ENCODE measurements at regions of chr1 and their contacts with region 1.

Region 1: DNA sequence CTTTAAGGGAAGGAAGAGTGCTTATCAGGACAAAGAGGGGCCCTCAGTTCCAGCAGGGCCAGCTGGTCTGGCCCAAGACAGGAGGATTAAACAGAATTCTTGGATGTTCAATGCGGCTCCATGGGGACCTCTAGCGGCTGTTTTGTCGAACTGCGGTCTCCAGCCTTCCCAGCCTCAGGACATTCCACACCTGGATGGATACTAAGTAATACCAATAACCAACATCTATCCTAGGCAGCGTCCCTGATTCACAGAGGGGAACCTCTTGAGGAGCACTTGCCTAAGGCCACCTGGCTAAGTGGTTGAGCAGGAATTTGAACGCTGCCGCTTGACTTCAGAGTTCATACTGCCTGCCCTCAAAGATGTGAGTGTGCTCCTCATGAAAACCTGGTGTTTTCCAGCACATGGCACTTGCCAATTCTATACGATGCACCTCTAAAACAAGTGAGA is 15.5 kb upstream of the CD247 start:
- DNase-seq: peak; percentile 70
- ATAC-seq: peak; percentile 94

Region 2: GRCh38 chr1:167066333-167067122 is 467.3 kb before region 1 on chr1:
- intact Hi-C with region 1: loop called (anchors 10 kb)
- DNase-seq: peak; percentile 86
- ATAC-seq: peak; percentile 96

Region 3: DNA sequence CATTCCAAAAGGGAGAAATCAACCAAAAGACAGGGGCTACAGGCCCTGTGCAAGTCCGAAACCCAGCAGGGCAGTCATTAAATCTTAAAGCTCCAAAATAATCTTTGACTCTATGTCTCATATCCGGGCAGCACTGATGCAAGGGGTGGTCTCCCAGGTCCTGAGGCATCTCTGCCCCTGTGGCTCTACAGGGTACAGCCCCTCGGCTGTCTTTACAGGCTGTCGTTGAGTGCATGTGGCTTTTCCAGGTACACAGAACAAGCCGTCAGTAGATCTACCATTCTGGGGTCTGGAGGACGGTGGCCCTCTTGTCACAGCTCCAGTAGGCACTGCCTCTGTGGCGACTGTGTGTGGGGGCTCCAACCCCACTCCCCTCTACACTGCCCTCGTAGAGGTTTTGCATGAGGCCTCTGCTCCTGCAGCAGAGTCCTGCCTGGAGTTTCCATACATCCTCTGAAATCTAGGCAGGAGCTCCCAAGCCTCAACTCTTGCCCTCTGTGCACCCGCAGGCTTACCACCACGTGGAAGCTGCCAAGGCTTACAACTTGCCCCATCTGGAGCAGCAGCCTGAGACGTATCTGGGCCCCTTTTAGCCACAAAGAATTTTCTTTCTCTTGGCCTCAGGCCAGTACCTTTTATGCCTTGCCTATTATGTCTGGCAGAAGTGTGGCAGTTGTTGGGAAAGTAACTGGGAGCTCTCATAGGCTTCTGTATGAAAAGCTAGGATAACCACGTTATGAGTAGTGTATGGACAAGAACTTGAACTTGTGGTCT is 260.7 kb before region 1 on chr1:
- intact Hi-C with region 1: loop called (anchors 10 kb)
- DNase-seq: no peak
- ATAC-seq: peak; percentile 62

Region 4: DNA sequence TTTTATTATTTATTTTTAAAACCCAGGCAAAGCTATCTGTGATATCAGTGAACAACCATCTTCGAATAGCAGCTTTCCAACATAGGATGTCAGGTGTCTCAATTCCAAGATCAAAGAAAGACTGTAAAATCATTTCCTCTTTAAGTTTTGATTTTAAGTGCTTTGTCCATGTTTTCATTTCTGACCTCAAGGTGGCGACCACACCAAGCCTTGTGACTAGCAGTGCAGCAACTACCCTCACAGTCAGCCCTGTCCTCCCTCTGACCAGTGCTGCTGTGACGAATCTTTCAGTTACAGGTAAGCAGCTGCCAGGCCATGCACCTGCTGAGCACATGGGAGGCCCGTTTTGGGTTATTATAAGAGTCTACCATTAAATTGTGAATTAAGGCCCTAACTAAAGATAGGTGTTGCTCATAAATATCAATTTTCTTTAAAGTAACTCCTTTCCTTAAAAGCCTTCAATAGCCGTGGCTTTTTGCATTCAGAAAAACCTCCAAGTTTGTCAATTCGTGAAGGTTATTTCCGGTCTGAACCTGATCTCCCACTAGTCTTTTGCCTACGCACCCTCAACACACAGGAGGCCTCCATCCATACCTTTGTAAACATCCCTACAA is 132.5 kb before region 1 on chr1:
- intact Hi-C with region 1: loop called (anchors 5 kb)
- DNase-seq: no peak
- ATAC-seq: peak; percentile 64

Region 5: DNA sequence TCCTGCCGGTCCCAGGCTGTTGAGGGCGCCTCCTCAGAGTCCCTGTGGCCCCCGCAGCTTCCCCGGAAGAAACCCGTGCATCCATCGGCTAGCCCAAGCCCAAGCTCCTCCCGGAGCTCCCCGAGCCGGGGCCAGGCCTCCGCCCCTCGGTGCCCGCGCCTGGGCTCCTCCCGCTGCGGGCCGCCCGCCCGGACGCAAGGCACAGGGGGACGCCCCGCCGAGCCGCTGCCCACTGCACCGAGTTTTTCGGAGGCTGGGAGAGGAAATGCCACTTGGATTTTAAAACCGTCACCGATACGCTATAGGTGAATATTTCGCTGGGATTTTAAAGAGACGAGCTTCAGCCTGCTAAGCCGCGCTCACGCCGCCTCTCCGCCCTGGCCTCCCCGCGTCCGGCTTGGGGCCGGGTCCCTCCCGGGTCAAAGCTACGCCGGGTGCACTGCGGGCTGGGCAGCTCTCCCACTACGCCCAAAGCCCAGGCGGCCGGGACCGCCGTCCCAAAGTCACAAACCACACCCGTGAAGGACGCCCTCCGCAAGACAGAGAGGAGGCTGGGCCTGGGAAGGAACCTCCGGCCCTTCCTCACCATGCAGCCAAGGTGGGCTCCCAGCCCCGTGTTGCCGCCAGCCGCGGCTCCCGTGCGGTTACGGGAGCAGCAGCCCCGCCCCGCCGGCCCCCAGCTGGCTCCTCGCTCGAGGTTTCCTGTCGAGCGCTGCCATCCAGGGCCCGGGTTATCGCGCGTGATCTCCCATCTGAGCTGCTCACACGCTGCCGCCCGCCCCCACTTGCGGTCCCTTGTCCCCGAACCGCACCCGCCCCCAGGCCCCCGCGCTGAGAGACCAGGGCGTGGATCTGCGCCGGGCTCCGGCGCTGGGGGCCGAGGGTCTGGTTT is 78.7 kb before region 1 on chr1:
- intact Hi-C with region 1: loop called (anchors 10 kb)
- DNase-seq: peak; percentile 77
- ATAC-seq: peak; percentile 92